A673 (cell line): ENCODE measurements at regions of chr3 and their contacts with region 1.

Region 1: GRCh38 chr3:150183678-150184425 is 213.2 kb upstream of the PFN2 start:
- DNase-seq: peak; percentile 85
- H3K4me3 ChIP-seq: peak overlapping the region; percentile 36
- H3K27ac ChIP-seq: no peak overlapping the region
- H3K4me1 ChIP-seq: peaks cover 4% of the 10 kb centered on the region
- H3K27me3 ChIP-seq: no peaks in the 10 kb centered on the region
- CTCF ChIP-seq: peak; percentile 74

Region 2: GRCh38 chr3:149936812-149937233 is 247.0 kb before region 1 on chr3:
- CTCF ChIA-PET with region 1: no interaction called
- POLR2A ChIA-PET with region 1: no interaction called
- intact Hi-C with region 1: loop called (anchors 1 kb)
- DNase-seq: peak; percentile 82
- H3K4me3 ChIP-seq: no peak overlapping the region
- H3K27ac ChIP-seq: no peak overlapping the region
- H3K4me1 ChIP-seq: no peaks in the 10 kb centered on the region
- H3K27me3 ChIP-seq: no peaks in the 10 kb centered on the region
- CTCF ChIP-seq: peak; percentile 86

Region 3: DNA sequence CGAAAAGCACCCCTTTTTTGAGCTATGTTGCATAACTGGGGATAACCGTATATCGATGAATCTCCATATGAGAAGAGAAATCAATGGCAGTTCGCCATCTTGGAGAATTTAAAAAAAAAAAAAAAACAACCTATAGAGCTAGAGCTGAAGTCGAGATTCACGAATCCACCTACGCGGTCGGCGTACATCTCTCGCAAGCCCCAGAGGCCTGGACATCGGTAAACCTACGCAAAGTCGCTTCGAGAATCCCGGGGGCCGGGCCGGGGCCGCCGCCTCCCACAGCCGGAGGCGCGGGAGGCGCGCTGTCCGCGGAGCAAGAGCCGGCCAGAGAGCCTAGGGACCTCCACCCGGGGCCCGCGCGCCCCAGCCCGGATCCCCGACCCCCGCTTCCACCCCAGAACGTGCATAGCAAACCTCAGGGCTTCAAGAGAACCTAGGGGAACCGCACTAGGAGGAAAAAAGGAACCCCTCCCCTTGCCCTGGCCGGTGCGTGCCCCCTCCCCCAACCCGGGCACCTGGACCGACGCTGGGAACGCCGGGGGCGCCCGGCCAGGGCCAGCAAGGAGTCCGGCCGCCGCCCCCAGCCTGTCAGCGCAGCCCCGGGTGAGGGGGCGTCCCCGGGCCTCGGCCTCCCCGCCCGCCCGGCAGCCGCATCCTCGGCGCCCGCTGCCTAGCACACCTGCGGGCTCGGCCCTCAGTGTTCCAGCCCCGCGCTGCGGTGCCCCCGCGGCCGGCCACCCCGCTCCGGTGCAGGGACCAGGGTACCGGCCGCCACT is 213.7 kb before region 1 on chr3:
- CTCF ChIA-PET with region 1: interaction called, 30 read pairs
- POLR2A ChIA-PET with region 1: no interaction called
- intact Hi-C with region 1: loop called (anchors 1 kb)
- DNase-seq: peak; percentile 91
- H3K4me3 ChIP-seq: peak overlapping the region; percentile 83
- H3K27ac ChIP-seq: peak overlapping the region; percentile 95
- H3K4me1 ChIP-seq: peaks cover 29% of the 10 kb centered on the region
- H3K27me3 ChIP-seq: no peaks in the 10 kb centered on the region
- CTCF ChIP-seq: no peak

Region 4: DNA sequence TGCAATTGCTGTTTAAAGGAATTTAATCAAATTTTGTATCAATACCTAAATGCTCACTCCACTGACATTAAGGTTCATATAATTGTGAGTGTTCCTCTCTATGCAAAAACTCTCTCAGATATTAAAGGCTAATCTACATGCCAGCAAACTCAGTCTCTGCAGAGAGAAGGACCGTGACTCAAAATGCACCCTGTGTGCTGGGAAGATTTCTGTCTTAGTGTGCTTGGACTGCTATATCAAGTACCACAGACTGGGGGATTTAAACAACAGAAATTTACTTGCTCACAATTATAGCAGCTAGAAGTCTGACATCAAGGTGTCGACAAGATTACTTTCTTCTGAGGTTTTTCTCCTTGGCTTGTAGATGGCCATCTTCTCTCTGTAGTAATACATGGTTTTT is 194.5 kb before region 1 on chr3:
- CTCF ChIA-PET with region 1: no interaction called
- POLR2A ChIA-PET with region 1: interaction called, 13 read pairs
- intact Hi-C with region 1: no loop called
- DNase-seq: no peak
- H3K4me3 ChIP-seq: no peak overlapping the region
- H3K27ac ChIP-seq: no peak overlapping the region
- H3K4me1 ChIP-seq: no peaks in the 10 kb centered on the region
- H3K27me3 ChIP-seq: no peaks in the 10 kb centered on the region
- CTCF ChIP-seq: no peak

Region 5: GRCh38 chr3:150434234-150434633 is 250.4 kb after region 1 on chr3:
- CTCF ChIA-PET with region 1: no interaction called
- POLR2A ChIA-PET with region 1: no interaction called
- intact Hi-C with region 1: no loop called
- DNase-seq: no peak
- H3K4me3 ChIP-seq: no peak overlapping the region
- H3K27ac ChIP-seq: no peak overlapping the region
- H3K4me1 ChIP-seq: no peaks in the 10 kb centered on the region
- H3K27me3 ChIP-seq: no peaks in the 10 kb centered on the region
- CTCF ChIP-seq: no peak